HepG2 (cell line): ENCODE measurements at regions of chr9 and their contacts with region 1.

Region 1: GRCh38 chr9:33306037-33306436 is 15.7 kb downstream of the NFX1 start:
- DNase-seq: no peak
- ATAC-seq: no peak
- H3K4me3 ChIP-seq: no peak overlapping the region
- H3K27ac ChIP-seq: no peak overlapping the region
- H3K4me1 ChIP-seq: peaks cover under 1% of the 10 kb centered on the region; the same call in 1 of the 2 replicates
- H3K27me3 ChIP-seq: no peaks in the 10 kb centered on the region
- CTCF ChIP-seq: no peak
- EP300 ChIP-seq: no peak
- POLR2A ChIP-seq: no peak
- RAD21 ChIP-seq: no peak

Region 2: GRCh38 chr9:33366979-33367480 is 61.0 kb after region 1 on chr9:
- CTCF ChIA-PET with region 1: no interaction called
- POLR2A ChIA-PET with region 1: no interaction called
- in situ Hi-C with region 1: loop called (anchors 10 kb)
- intact Hi-C with region 1: no loop called
- DNase-seq: no peak
- ATAC-seq: no peak
- H3K4me3 ChIP-seq: no peak overlapping the region
- H3K27ac ChIP-seq: no peak overlapping the region
- H3K4me1 ChIP-seq: no peaks in the 10 kb centered on the region
- H3K27me3 ChIP-seq: no peaks in the 10 kb centered on the region
- CTCF ChIP-seq: no peak
- EP300 ChIP-seq: no peak
- POLR2A ChIP-seq: no peak
- RAD21 ChIP-seq: no peak

Region 3: DNA sequence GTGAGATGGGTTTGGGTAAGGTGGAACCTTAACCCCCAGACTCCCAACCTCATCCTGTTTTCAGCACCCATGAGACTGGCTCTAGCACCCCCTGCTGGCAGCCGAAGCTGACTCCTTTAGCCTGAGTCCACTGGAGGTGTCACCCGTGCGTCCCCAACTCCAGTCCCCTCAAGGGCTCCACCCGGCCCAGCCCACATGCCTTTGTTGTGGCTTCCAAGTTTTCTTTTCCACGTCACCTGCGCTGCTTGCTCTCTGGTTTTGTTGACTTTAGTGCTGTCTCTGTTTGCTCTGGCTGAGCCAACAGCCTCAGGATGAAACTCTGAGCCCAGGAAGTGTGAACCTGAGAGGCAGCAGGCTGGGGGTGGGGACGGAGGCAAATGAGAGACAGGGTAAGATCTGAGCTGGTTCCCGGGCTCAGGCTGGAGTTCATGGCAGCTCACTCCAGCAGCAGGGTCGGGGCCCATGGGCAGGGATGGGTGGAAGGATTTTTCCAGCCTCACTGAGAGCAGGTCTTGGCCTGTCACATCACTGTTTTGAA is 109.5 kb after region 1 on chr9:
- CTCF ChIA-PET with region 1: no interaction called
- POLR2A ChIA-PET with region 1: no interaction called
- in situ Hi-C with region 1: no loop called
- intact Hi-C with region 1: no loop called
- DNase-seq: peak; percentile 99
- ATAC-seq: peak; percentile 95
- H3K4me3 ChIP-seq: peak overlapping the region in 1 of 3 experiments; percentile 42; a peak in 1 of 6 replicates
- H3K27ac ChIP-seq: no peak overlapping the region
- H3K4me1 ChIP-seq: peaks cover 59% of the 10 kb centered on the region
- H3K27me3 ChIP-seq: peaks cover 3 to 62% of the 10 kb centered on the region in 2 experiments; a peak in 4 of 5 replicates
- CTCF ChIP-seq: peak; percentile 96
- EP300 ChIP-seq: peak; percentile 84 to 98; a peak in 3 of 4 replicates
- POLR2A ChIP-seq: no peak
- RAD21 ChIP-seq: peak; percentile 84